Upper lobe of right lung (tissue), 1 donor: ENCODE measurements at regions of chr1 and their contacts with region 1.

Region 1: GRCh38 chr1:246506674-246507481 is at the start of gene SMYD3:
- DNase-seq: peak; percentile 90
- ATAC-seq: peak; percentile 97
- H3K4me3 ChIP-seq: peak within 1 kb of the TSS; percentile 82
- H3K27ac ChIP-seq: peak within 1 kb of the TSS; percentile 65
- H3K4me1 ChIP-seq: peaks cover 11% of the 10 kb centered on the region
- H3K27me3 ChIP-seq: no peaks in the 10 kb centered on the region
- CTCF ChIP-seq: peak; percentile 19
- total RNA-seq, gene SMYD3: 27.2 TPM

Region 2: GRCh38 chr1:246699095-246699735 is 192.3 kb after region 1 on chr1:
- intact Hi-C with region 1: loop called (anchors 10 kb)
- DNase-seq: peak; percentile 87
- ATAC-seq: peak; percentile 97
- H3K4me3 ChIP-seq: peak overlapping the region; percentile 49
- H3K27ac ChIP-seq: peak overlapping the region; percentile 63
- H3K4me1 ChIP-seq: peaks cover 9% of the 10 kb centered on the region
- H3K27me3 ChIP-seq: no peaks in the 10 kb centered on the region
- CTCF ChIP-seq: peak; percentile 87